ENCODE measurements at regions of chr11 and their contacts with region 1.

Region 1: DNA sequence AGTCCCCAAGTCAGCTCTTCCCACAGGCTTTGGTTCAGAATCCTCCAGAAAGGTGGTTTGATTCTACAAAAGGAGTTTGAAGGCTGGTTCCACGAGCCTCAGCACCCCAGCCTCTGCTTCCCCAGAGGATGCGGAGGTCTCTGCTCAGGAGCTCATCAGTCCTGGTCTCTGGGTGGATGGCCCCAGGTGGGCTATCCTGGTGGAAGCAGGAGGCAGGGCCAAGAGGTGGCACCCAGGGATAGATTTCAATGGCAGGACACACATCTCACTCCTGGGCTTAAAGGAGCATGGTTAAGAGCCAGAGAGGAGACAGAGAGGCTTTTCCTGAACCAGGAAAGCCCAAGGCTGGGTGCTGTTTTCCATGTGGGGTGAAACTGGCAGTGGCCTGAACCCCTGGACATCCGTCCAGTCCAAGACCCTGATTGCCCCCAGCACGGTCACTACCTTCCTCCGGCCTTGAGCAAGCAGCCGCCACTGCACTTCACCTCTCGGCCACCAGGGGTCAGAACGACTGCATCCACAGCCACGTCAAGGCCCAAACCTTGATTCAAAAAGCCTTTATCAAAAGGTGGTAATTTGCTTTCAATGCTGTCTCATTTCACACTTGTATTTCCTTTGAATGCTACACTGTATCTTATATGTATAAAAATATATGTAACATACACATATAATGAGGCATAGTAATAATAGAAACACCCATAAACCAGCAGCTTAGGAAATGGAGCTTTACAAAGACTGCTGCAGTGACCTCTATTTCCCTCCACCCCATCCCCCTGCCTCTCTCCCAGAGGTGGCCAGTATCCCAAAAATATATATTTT is 19.3 kb upstream of the FXYD2 start:
- DNase-seq: peak; percentile 20
- H3K4me3 ChIP-seq: no peak overlapping the region
- H3K27ac ChIP-seq: no peak overlapping the region
- H3K27me3 ChIP-seq: peaks cover 7% of the 10 kb centered on the region
- CTCF ChIP-seq: peak; percentile 98

Region 2: DNA sequence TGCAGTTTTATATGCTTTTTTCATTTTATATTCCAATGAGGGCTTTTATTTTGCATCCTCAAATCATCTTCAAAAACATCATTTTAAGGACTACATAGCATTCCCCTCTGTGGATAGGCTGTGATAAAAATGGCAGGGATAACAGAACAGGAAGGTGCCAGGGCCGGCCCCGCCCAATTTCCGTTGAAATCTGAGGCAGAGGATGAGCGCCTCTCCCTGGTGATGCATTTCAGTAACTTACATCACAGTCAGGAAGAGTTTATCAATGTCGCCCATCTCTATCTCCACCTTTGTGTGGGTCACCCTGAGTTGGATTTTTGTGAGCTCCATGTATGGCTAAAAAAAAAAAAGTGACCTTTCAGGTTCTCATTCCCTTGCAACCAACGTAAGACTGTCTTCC is 248.4 kb before region 1 on chr11:
- CTCF ChIA-PET with region 1: no interaction called
- POLR2A ChIA-PET with region 1: no interaction called
- DNase-seq: no peak
- H3K4me3 ChIP-seq: no peak overlapping the region
- H3K27ac ChIP-seq: no peak overlapping the region
- H3K27me3 ChIP-seq: peaks cover 6% of the 10 kb centered on the region
- CTCF ChIP-seq: no peak

Region 3: GRCh38 chr11:117766576-117766975 is 77.3 kb before region 1 on chr11:
- CTCF ChIA-PET with region 1: no interaction called
- POLR2A ChIA-PET with region 1: no interaction called
- DNase-seq: no peak
- H3K4me3 ChIP-seq: no peak overlapping the region
- H3K27ac ChIP-seq: no peak overlapping the region
- H3K27me3 ChIP-seq: peaks cover 9% of the 10 kb centered on the region
- CTCF ChIP-seq: no peak

Region 4: DNA sequence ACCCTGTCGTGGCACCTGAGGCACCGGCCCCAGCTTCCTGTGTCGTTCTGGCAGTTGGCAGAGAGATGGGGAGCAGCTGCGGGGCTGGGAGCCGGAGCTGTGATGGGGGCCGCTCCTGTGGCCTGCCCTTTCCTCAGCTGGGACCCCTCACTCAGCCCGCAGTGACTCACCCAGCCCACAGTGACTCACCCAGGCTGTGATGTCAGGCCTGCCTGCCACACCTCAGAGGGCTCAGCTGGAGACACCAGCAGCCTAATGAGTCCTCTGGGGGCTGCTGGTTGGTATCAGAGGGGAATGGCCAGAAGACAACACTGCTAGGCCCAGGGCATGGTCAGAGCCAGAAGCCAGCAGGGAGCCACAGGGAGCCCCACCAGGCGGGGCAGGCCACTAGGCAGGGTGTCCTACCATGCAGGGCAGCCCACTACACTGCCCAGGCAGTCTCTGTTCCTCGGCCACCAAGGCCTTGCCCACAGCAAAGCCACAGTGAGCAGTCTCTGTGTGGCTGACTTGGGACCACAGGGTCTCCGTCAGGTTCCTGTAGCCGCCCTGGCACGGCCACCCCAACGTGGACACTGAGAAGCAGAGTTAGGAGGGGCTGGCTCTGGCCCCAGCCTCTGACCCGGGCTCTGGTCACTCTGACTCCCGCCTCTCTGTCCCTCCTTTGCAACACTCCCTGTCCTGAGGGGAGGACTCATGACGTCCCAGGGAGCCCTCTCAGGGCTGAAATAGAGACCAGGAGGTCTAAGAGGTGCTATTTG is 15.1 kb before region 1 on chr11:
- CTCF ChIA-PET with region 1: interaction called, 15 read pairs
- POLR2A ChIA-PET with region 1: no interaction called
- DNase-seq: peak; percentile 51
- H3K4me3 ChIP-seq: no peak overlapping the region
- H3K27ac ChIP-seq: no peak overlapping the region
- H3K27me3 ChIP-seq: peaks cover 16% of the 10 kb centered on the region
- CTCF ChIP-seq: no peak

Region 5: DNA sequence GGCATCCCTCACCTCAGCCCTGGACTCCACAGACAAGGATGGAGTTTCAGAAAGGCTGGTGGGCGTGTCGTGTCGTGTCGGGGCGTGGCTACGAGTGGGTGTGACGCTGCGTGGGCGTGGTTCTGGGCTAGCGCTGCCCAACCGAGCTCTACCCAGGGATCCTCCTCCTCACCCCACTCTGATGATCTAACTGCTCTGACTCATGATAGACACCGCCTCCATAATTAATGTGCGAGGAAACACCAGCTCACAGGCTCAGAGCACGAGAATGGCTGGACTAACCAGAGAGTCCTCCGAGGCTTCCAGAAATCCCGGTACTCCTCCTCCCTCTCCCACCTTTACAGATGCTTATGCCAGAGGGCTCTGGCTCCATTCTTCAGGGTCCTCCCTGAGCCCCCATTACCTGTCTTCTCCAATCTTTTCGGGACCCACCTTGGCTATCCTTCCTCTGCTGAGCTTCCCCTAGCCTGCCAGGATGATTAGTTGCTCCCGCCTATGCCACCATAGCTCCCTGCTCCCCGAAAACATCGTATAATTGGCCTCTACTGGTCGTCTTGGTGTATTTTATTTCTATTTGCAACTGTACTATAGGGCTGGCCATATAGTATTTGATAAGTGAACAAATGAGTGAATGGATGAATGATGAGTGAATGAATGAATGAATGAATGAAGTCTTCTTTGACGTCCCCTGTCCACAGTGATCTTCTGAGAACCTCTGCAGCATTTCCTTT is 63.5 kb after region 1 on chr11:
- CTCF ChIA-PET with region 1: interaction called, 52 read pairs
- POLR2A ChIA-PET with region 1: no interaction called
- DNase-seq: peak; percentile 70
- H3K4me3 ChIP-seq: no peak overlapping the region; the same call in 1 of the 2 replicates
- H3K27ac ChIP-seq: no peak overlapping the region
- H3K27me3 ChIP-seq: peaks cover 3% of the 10 kb centered on the region
- CTCF ChIP-seq: no peak

Region 6: DNA sequence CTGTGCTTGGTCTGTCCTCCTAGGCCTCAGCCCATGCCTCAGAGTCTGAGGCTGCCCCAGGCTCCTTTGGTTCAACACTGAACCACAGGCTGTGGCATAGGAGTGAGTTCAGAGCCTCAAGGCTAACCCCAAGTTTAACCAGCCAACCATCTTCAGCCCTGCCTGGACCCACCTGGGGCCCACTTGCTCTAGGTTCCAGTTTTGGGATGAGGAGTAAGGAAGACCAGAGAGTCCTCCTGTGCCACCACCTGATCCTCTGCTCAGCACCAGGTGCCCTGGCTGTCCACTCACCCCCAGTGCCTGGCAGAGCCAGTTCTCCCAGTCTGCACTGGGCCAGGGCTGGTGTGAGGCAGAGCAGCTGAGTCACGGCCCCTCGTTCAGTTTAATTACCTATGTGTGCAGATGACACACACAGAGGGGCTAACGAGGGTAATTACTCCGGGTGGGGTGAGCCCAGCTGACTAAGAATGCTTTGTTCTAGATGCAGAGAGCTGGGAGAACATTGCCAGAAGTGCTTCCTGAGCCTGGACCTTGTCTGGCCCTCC is 97.4 kb after region 1 on chr11:
- CTCF ChIA-PET with region 1: interaction called, 256 read pairs
- POLR2A ChIA-PET with region 1: no interaction called
- DNase-seq: no peak
- H3K4me3 ChIP-seq: no peak overlapping the region
- H3K27ac ChIP-seq: no peak overlapping the region
- H3K27me3 ChIP-seq: peaks cover 15% of the 10 kb centered on the region
- CTCF ChIP-seq: no peak